ENCODE measurements at regions of chr5 and their contacts with region 1.

Region 1: DNA sequence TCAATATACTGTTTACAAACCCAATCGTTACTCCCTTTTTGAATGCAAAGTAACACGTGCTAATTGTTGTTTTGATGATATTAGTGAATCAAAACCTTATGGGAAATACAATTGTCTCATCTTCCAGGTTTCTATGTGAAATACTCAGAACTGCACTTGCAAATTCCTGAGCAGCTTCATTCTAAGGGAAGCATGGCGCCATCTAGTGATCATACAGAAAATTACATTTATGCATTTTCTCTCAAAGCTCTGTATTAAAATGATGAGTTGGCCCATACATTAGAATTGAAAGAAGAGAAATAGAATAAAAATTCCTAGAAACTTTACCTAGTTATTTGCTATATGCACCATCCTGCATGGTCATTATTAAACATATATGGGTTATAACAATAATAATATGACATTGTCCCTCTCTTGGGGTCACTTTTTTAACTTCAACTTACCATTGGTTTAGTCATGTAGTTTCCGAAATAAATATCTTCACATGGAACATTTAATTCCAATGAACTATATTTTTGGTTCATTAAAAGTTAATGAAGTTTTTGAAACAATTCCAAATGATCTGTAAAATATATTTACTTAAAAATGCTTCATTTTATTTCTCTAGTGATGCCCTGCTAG is 220.0 kb downstream of the PDE4D start:
- DNase-seq: no peak
- H3K4me3 Mint-ChIP-seq: no peak overlapping the region
- H3K27ac Mint-ChIP-seq: no peak overlapping the region
- H3K4me1 Mint-ChIP-seq: no peaks in the 10 kb centered on the region
- H3K27me3 Mint-ChIP-seq: no peaks in the 10 kb centered on the region

Region 2: DNA sequence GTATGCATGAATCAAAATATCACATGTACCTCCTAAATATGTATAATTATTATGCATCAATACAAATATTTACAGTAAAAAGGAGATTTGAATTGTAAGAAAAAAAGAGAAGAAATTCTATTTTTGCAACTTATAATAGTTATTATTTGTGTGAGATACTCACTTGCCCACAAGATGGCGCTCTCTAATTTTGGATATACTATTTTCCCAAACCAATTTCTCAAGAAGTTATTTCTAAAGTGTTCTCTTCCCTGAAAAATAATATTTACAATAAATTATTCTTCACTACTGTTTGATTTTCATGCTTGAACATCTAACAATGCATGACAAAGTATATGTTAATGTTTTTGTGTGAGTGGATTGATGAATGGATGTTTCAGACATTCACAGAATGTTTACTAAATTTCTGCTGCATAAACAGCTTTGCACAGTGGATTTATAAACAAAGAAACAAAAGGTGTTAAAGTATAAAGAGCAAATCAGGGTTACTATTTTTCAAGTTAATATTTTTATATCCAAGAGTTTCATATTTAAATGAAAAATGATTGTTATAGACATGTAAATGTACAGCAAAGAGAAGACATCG is 283.4 kb before region 1 on chr5:
- CTCF ChIA-PET with region 1: interaction called, 23 read pairs
- POLR2A ChIA-PET with region 1: no interaction called
- intact Hi-C with region 1: loop called (anchors 1 kb)
- DNase-seq: no peak
- H3K4me3 Mint-ChIP-seq: no peak overlapping the region
- H3K27ac Mint-ChIP-seq: no peak overlapping the region
- H3K4me1 Mint-ChIP-seq: no peaks in the 10 kb centered on the region
- H3K27me3 Mint-ChIP-seq: peaks cover 6% of the 10 kb centered on the region

Region 3: GRCh38 chr5:59506285-59506877 is 167.2 kb before region 1 on chr5:
- CTCF ChIA-PET with region 1: interaction called, 22 read pairs
- POLR2A ChIA-PET with region 1: no interaction called
- intact Hi-C with region 1: loop called (anchors 1 kb)
- DNase-seq: no peak
- H3K4me3 Mint-ChIP-seq: no peak overlapping the region
- H3K27ac Mint-ChIP-seq: no peak overlapping the region
- H3K4me1 Mint-ChIP-seq: no peaks in the 10 kb centered on the region
- H3K27me3 Mint-ChIP-seq: no peaks in the 10 kb centered on the region

Region 4: GRCh38 chr5:59648949-59649921 is 24.3 kb before region 1 on chr5:
- CTCF ChIA-PET with region 1: no interaction called
- POLR2A ChIA-PET with region 1: no interaction called
- intact Hi-C with region 1: no loop called
- DNase-seq: no peak
- H3K4me3 Mint-ChIP-seq: no peak overlapping the region
- H3K27ac Mint-ChIP-seq: no peak overlapping the region
- H3K4me1 Mint-ChIP-seq: peaks cover 5% of the 10 kb centered on the region
- H3K27me3 Mint-ChIP-seq: no peaks in the 10 kb centered on the region

Region 5: DNA sequence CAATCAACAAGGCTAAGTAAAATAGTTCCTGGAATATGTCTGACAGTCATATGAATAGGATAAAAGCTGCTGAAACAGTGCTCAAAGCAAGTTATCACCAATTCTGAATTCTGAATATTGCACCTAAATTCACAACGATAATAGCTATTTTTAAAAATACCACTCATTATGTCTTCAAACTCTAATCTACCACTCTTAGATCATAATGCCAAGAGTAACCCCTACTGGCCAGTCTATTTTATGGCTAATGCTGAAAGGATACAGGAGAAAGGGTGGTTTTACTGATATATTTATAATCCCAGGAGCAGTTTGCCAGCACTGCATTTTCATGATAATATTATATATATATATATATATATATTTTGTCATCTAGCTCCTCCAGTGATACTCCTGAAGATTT is 12.8 kb before region 1 on chr5:
- CTCF ChIA-PET with region 1: interaction called, 17 read pairs
- POLR2A ChIA-PET with region 1: no interaction called
- intact Hi-C with region 1: no loop called
- DNase-seq: no peak
- H3K4me3 Mint-ChIP-seq: no peak overlapping the region
- H3K27ac Mint-ChIP-seq: no peak overlapping the region
- H3K4me1 Mint-ChIP-seq: peaks cover 4% of the 10 kb centered on the region
- H3K27me3 Mint-ChIP-seq: peaks cover 4% of the 10 kb centered on the region

Region 6: GRCh38 chr5:59810041-59810440 is 136.5 kb after region 1 on chr5:
- CTCF ChIA-PET with region 1: no interaction called
- POLR2A ChIA-PET with region 1: no interaction called
- intact Hi-C with region 1: no loop called
- DNase-seq: peak; percentile 72
- H3K4me3 Mint-ChIP-seq: no peak overlapping the region
- H3K27ac Mint-ChIP-seq: no peak overlapping the region
- H3K4me1 Mint-ChIP-seq: no peaks in the 10 kb centered on the region
- H3K27me3 Mint-ChIP-seq: peaks cover 11% of the 10 kb centered on the region